Activated CD4-positive, alpha-beta T cell treated with anti-CD3 and anti-CD28 coated beads, Interleukin-2, amount 10 ng/mL, durations not matched to agents 24 days and 14 days (primary cell): ENCODE measurements at regions of chr1 and their contacts with region 1.

Region 1: GRCh38 chr1:233598891-233599541 is 14.9 kb upstream of the KCNK1 start:
- DNase-seq: peak; percentile 66
- H3K4me3 Mint-ChIP-seq: peak overlapping the region; percentile 30
- H3K27ac Mint-ChIP-seq: peak overlapping the region; percentile 78
- H3K4me1 Mint-ChIP-seq: peaks cover 14% of the 10 kb centered on the region
- H3K27me3 Mint-ChIP-seq: no peaks in the 10 kb centered on the region

Region 2: DNA sequence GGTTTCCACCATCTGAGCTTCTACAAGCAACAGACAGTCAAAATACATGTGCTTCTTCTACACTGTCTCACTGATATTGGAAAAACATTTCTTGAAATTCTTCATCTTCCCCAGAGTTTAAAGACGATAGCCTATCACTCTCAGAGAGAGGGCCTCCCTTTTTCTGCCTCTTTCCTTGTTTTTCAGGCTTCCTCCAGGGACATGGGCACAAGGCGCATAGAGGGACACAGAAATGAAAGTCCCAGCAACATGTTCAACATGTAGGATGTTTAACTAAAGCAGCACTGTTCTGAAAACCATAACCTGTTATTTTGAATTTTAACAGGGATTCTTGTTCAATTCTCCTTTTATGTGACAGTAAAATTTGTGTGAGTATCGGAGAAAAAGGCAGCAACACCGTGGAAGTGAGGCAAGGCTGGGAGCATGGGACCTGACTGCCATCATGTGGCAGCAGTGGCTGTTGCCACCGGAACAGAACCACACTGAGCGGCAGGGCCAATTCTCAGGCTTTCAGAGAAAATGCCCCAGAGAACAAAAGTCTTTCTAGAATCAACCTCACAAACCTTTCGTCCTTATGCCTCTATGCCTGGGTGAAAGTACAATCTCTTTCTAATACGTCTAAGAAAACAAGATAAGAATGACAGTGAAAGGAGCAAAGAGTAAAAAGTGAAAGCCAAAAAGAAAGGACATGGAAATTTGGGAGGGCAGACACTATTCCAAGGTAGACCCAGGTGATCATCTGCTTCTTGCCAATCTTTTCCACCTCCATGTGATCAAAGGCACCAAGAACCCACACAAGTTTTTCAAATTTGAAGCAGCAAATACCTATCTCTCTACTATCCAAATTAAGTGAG is 358.0 kb before region 1 on chr1:
- intact Hi-C with region 1: no loop called
- DNase-seq: peak; percentile 74
- H3K4me3 Mint-ChIP-seq: no peak overlapping the region
- H3K27ac Mint-ChIP-seq: no peak overlapping the region
- H3K4me1 Mint-ChIP-seq: peaks cover 9% of the 10 kb centered on the region
- H3K27me3 Mint-ChIP-seq: no peaks in the 10 kb centered on the region

Region 3: DNA sequence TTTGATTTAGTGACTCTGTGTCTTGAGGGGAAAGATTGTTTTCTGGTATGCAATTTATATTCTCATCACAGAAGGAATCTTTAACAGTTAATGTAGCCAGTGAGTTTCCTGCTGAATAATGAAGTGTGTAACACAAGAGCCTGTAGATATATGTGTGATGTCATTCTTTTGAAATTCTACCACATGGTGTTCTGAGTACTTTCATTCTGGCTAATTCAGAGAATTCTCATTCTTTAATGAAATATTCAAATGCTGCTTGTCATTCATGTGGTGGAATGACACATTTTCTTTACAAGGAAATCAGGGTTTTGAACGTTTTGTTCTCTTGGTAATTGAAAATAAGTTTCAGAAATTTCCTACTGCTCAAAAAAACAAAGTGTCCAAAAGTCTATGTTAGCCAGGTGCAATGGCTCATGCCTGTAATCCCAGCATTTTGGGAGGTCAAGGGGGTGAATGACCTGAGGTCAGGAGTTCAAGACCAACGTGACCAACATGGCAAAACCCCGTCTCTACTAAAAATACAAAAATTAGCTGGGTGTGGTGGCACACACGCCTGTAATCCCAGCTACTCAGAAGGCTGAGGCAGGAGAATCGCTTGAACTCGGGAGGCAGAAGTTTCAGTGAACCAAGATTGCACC is 191.9 kb before region 1 on chr1:
- intact Hi-C with region 1: loop called (anchors 2 kb)
- DNase-seq: no peak
- H3K4me3 Mint-ChIP-seq: peak overlapping the region; percentile 15
- H3K27ac Mint-ChIP-seq: peak overlapping the region; percentile 54
- H3K4me1 Mint-ChIP-seq: peaks cover 21% of the 10 kb centered on the region
- H3K27me3 Mint-ChIP-seq: peaks cover 15% of the 10 kb centered on the region

Region 4: DNA sequence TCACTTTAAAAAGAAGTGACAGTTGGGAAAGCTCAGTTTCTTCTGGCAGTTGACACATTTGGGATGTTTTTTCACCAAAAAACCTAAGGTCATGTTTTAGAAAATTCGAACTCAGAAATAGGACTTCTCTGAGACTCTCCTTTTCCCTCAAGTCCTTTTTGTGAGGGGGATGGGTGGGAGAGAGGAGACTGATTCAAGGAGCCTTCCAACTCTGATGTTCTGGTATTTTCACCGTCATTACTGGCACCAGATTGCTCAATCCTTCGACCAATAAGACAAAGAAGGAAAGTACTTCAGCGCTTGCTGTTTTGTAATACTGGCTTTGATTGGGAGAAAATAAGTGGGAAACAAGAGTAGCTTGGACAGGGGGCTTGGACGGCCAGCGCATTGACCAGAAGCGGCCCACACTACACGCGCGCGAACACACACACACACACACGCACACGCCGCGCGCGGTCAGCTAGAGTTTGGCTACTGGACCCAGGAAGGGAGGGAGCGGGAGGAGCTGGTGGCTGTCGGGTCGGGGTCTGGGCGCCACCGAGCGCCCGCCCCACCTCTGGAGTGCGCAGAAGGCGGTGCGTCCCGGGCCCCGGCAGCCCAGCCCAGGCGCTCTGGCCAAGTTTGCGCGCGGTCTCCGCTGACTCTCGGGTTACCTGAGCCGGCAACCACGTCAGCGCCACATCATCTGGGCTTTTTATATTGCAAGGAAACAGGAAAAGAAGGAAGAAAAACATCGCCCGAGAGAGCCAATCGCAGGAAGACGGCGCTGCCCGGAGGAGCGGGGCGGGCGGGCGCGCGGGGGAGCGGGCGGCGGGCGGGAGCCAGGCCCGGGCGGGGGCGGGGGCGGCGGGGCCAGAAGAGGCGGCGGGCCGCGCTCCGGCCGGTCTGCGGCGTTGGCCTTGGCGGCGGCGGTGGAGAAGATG is 14.5 kb after region 1 on chr1 and contains the start of gene KCNK1:
- intact Hi-C with region 1: loop called (anchors 1 kb)
- DNase-seq: peak; percentile 59
- H3K4me3 Mint-ChIP-seq: peak within 1 kb of the TSS; percentile 80
- H3K27ac Mint-ChIP-seq: peak within 1 kb of the TSS; percentile 50
- H3K4me1 Mint-ChIP-seq: peaks cover 8% of the 10 kb centered on the region
- H3K27me3 Mint-ChIP-seq: peaks cover 70% of the 10 kb centered on the region
- total RNA-seq, gene KCNK1: 1.9 and 2.3 TPM in 2 replicates

Region 5: DNA sequence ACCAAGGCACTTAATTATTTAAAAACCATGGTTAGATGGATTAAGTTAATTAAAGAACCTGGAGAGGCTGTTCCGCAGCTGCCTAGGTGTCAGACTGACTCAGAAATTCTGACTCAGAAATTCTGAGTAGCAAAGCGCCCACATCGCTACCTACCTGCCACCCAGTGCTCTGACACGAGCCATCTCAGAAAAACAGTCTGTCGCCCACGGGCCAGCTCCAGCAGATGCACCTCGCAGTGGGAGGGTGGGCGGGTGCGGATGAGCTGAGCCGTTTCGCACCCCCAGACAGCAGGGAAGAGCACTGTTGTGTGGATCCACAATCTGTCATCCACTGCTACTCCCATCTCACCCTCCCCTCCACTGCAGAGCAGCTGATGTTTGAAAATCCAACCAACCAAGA is 28.4 kb after region 1 on chr1:
- intact Hi-C with region 1: loop called (anchors 1 kb)
- DNase-seq: no peak
- H3K4me3 Mint-ChIP-seq: no peak overlapping the region
- H3K27ac Mint-ChIP-seq: no peak overlapping the region
- H3K4me1 Mint-ChIP-seq: peaks cover 3% of the 10 kb centered on the region
- H3K27me3 Mint-ChIP-seq: peaks cover 8% of the 10 kb centered on the region